Mucosa of descending colon (tissue), 3 donors: ENCODE measurements at regions of chrX and their contacts with region 1.

Region 1: GRCh38 chrX:135572436-135572835 is 52.0 kb downstream of the INTS6L start:
- DNase-seq: no peak
- ATAC-seq: no peak
- H3K4me3 ChIP-seq: no peak overlapping the region
- H3K4me1 ChIP-seq: no peaks in the 10 kb centered on the region
- CTCF ChIP-seq: no peak

Region 2: DNA sequence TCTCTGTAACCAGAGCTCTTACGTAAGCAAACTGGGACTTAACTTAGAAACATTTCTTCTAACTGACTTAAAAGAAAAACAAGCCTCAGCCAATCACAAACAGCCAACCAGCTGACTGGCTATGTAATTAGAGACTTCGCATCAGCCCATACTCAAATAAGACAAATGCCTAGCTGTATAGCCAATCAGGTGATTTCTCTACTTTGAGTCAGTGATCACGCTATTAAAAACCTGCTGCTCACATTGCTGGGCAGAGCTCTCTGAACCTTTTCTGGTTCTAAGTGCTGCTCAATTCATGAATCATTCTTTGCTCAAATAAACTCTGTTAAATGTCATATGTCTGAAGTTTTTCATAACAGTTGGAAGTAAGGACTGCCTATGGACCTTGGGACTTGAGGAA is 160.5 kb before region 1 on chrX:
- intact Hi-C with region 1: no loop called
- DNase-seq: no peak
- ATAC-seq: no peak
- H3K4me3 ChIP-seq: no peak overlapping the region
- H3K4me1 ChIP-seq: no peaks in the 10 kb centered on the region
- CTCF ChIP-seq: no peak

Region 3: GRCh38 chrX:135484641-135485289 is 87.7 kb before region 1 on chrX:
- intact Hi-C with region 1: loop called in 1 of 2 experiments (anchors 10 kb)
- DNase-seq: peak in 1 of 3 donors; percentile 35
- ATAC-seq: no peak
- H3K4me3 ChIP-seq: no peak overlapping the region
- H3K4me1 ChIP-seq: no peaks in the 10 kb centered on the region
- CTCF ChIP-seq: no peak